WTC11 (cell line): ENCODE measurements at regions of chr16 and their contacts with region 1.

Region 1: DNA sequence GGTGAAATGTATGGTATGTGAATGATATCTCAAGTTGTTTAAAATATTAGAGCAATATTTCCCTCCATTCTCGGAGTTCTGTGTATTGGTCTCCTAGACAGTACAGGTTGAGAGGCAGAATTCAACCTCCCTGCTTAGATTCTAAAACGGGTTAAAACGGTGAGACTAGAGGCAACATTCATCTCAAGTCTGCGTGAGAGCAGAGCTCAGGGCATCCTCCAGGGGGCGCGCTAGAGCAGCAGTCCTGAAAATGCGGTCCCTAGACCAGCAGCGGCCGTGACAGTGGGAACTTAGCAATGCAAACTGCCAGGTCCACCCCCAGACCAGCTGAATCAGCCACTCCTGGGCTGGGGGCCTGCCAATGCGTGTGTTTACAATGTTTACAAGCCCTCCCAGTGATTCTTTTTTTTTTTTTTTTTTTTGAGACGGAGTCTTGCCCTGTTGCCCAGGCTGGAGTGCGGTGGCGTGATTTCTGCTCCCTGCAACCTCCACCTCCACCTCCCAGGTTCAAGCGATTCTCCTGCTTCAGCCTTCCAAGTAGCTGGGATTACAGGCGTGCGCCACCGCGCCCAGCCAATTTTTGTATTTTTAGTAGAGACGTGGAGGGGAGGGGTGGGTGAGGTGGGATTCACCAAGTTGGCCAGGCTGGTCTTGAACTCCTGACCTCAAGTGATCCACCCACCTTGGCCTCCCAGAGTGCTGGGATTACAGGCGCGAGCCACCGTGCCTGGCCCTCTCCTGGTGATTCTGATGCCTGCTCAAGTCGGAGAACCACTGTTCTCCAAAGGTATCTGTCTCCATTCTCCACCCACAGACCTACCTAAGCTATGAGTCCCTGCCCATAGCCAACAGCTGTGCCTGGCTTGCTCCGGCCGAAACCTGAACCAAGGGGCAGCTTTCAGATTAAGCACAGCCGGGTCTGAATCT is 24.2 kb downstream of the KLHL36 start:
- DNase-seq: peak; percentile 92
- ATAC-seq: peak; percentile 84
- H3K4me3 Mint-ChIP-seq: no peak overlapping the region
- H3K27ac Mint-ChIP-seq: peak overlapping the region; percentile 63
- H3K4me1 Mint-ChIP-seq: peaks cover 35% of the 10 kb centered on the region
- H3K27me3 Mint-ChIP-seq: no peaks in the 10 kb centered on the region
- CTCF ChIP-seq: peak; percentile 91

Region 2: GRCh38 chr16:84617791-84618580 is 54.6 kb before region 1 on chr16 and contains the start of gene COTL1:
- CTCF ChIA-PET with region 1: interaction called, 17 read pairs
- POLR2A ChIA-PET with region 1: no interaction called
- DNase-seq: peak; percentile 95
- ATAC-seq: peak; percentile 67
- H3K4me3 Mint-ChIP-seq: peak within 1 kb of the TSS; percentile 96
- H3K27ac Mint-ChIP-seq: peak within 1 kb of the TSS; percentile 77
- H3K4me1 Mint-ChIP-seq: peaks cover 48% of the 10 kb centered on the region
- H3K27me3 Mint-ChIP-seq: peaks cover 11% of the 10 kb centered on the region
- CTCF ChIP-seq: no peak
- total RNA-seq, gene COTL1: 102 to 122 TPM (median 122 TPM) in 3 replicates

Region 3: GRCh38 chr16:84686707-84687298 is 14.3 kb after region 1 on chr16:
- CTCF ChIA-PET with region 1: interaction called, 27 read pairs
- POLR2A ChIA-PET with region 1: no interaction called
- DNase-seq: no peak
- ATAC-seq: peak; percentile 31
- H3K4me3 Mint-ChIP-seq: no peak overlapping the region
- H3K27ac Mint-ChIP-seq: no peak overlapping the region
- H3K4me1 Mint-ChIP-seq: peaks cover 21% of the 10 kb centered on the region
- H3K27me3 Mint-ChIP-seq: peaks cover 3% of the 10 kb centered on the region; the same call in 1 of the 2 replicates
- CTCF ChIP-seq: no peak

Region 4: GRCh38 chr16:84699712-84700445 is 27.3 kb after region 1 on chr16 and contains the start of gene USP10:
- CTCF ChIA-PET with region 1: interaction called, 13 read pairs
- POLR2A ChIA-PET with region 1: interaction called, 5 read pairs
- DNase-seq: peak; percentile 87
- ATAC-seq: peak; percentile 95
- H3K4me3 Mint-ChIP-seq: peak within 1 kb of the TSS; percentile 97
- H3K27ac Mint-ChIP-seq: peak within 1 kb of the TSS; percentile 97
- H3K4me1 Mint-ChIP-seq: peaks cover 41% of the 10 kb centered on the region
- H3K27me3 Mint-ChIP-seq: no peaks in the 10 kb centered on the region
- CTCF ChIP-seq: no peak
- total RNA-seq, gene USP10: 138 to 152 TPM (median 139 TPM) in 3 replicates

Region 5: GRCh38 chr16:84720177-84720579 is 47.6 kb after region 1 on chr16:
- CTCF ChIA-PET with region 1: interaction called, 61 read pairs
- POLR2A ChIA-PET with region 1: no interaction called
- DNase-seq: no peak
- ATAC-seq: no peak
- H3K4me3 Mint-ChIP-seq: no peak overlapping the region
- H3K27ac Mint-ChIP-seq: 0 out of 2 replicates have a peak overlapping the region, but pooled peaks have one; percentile 50
- H3K4me1 Mint-ChIP-seq: peaks cover 69% of the 10 kb centered on the region
- H3K27me3 Mint-ChIP-seq: no peaks in the 10 kb centered on the region
- CTCF ChIP-seq: no peak

Region 6: GRCh38 chr16:84754353-84754856 is 81.9 kb after region 1 on chr16:
- CTCF ChIA-PET with region 1: no interaction called
- POLR2A ChIA-PET with region 1: no interaction called
- DNase-seq: peak; percentile 65
- ATAC-seq: peak; percentile 88
- H3K4me3 Mint-ChIP-seq: no peak overlapping the region
- H3K27ac Mint-ChIP-seq: 0 out of 2 replicates have a peak overlapping the region, but pooled peaks have one; percentile 48
- H3K4me1 Mint-ChIP-seq: peaks cover 47% of the 10 kb centered on the region
- H3K27me3 Mint-ChIP-seq: no peaks in the 10 kb centered on the region
- CTCF ChIP-seq: peak; percentile 63

Region 7: DNA sequence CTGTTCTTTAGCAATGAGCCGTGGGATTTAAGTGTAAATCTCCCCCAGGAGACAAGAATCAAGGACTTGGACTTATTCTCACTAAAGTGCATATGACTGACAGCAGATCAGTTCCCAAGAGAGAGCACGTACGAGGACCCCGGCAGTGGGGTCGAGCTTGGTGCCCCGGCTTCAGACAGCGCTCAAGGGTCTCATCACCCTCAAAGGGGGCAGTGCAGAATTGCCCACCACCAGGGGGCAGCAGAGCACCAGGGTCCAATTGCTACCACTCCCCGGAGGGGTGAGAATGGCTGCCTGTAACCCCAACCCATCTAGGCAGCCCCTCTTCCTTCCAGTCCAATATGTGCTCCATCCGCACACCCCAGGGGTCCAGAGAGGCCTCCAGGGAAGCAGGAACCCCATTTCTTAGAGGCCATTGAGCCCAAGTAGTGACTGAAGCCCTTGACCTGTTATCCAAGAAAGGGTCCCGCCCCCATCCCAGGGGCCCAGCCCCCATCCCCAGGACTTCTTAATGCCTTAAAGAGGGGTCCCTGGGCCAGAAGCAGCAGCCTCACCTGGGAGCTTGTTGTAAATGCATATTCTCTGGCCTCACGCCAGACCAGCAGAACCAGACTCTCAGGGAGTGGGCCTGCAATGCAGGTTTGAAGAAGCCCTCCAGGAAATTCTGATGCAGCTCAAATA is 252.7 kb after region 1 on chr16:
- CTCF ChIA-PET with region 1: no interaction called
- POLR2A ChIA-PET with region 1: no interaction called
- DNase-seq: peak; percentile 94
- ATAC-seq: peak; percentile 87
- H3K4me3 Mint-ChIP-seq: no peak overlapping the region
- H3K27ac Mint-ChIP-seq: 0 out of 2 replicates have a peak overlapping the region, but pooled peaks have one; percentile 70
- H3K4me1 Mint-ChIP-seq: peaks cover 14% of the 10 kb centered on the region
- H3K27me3 Mint-ChIP-seq: no peaks in the 10 kb centered on the region
- CTCF ChIP-seq: peak; percentile 96